BJ (cell line): ENCODE measurements at regions of chr10 and their contacts with region 1.

Region 1: GRCh38 chr10:93039721-93040120 is 20.9 kb upstream of the CYP26C1 start:
- DNase-seq: no peak
- H3K4me3 ChIP-seq: no peak overlapping the region
- H3K27me3 ChIP-seq: no peaks in the 10 kb centered on the region
- CTCF ChIP-seq: peak; percentile 79

Region 2: GRCh38 chr10:92903633-92904032 is 136.1 kb before region 1 on chr10:
- CTCF ChIA-PET with region 1: no interaction called
- POLR2A ChIA-PET with region 1: no interaction called
- DNase-seq: no peak
- H3K4me3 ChIP-seq: no peak overlapping the region
- H3K27me3 ChIP-seq: no peaks in the 10 kb centered on the region
- CTCF ChIP-seq: no peak

Region 3: GRCh38 chr10:92914478-92915325 is 125.0 kb before region 1 on chr10:
- CTCF ChIA-PET with region 1: interaction called, 10 read pairs
- POLR2A ChIA-PET with region 1: no interaction called
- DNase-seq: peak; percentile 8
- H3K4me3 ChIP-seq: no peak overlapping the region
- H3K27me3 ChIP-seq: no peaks in the 10 kb centered on the region
- CTCF ChIP-seq: peak; percentile 80

Region 4: DNA sequence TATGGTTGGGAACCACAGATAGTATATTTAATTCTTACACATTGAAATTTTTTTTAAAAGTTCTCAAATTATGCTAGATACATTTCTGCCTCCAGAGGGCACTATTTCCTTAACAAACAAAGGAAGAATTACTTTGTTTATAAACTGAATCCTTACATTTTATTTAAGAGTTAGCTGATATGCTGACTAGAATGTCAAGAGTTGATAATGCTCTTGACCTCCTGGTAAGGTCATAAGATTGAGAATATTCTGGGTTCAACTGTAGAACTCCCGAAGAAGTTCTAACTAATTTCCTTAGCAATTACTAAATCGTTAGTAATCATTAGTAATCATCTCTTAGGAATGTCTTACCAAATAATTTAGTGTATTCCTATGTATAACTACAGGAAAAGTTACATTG is 74.4 kb before region 1 on chr10:
- CTCF ChIA-PET with region 1: interaction called, 13 read pairs
- POLR2A ChIA-PET with region 1: no interaction called
- DNase-seq: no peak
- H3K4me3 ChIP-seq: no peak overlapping the region
- H3K27me3 ChIP-seq: no peaks in the 10 kb centered on the region
- CTCF ChIP-seq: peak; percentile 54

Region 5: DNA sequence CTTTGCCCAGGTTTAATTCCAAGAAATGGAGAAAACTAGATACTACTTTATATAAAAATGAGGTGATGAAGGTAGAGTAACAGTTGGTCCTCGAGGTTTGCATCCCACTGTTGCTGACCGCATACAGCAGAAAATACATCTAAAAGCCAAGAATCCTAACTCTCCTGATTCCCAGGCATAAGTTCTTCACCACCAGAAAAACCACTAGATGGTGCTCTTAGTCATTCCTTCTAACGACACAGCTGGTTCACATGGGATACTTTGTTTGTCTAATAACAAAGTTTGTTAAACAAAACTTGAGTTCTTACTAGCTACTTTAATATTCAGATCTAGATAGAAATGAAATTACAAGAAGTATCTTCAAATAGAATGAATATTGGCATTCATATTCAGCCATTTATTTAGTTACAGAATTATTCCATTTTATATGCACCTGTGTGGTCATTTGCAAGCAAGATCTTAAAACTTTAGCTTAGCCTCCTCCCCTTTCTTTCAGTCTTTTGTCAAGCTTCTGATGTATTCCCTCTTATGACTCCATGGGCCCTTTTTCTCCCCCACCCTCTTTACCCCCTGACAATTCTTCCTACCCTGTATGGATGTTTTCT is 33.2 kb before region 1 on chr10:
- CTCF ChIA-PET with region 1: interaction called, 81 read pairs
- POLR2A ChIA-PET with region 1: no interaction called
- DNase-seq: no peak
- H3K4me3 ChIP-seq: no peak overlapping the region
- H3K27me3 ChIP-seq: no peaks in the 10 kb centered on the region
- CTCF ChIP-seq: peak; percentile 74

Region 6: DNA sequence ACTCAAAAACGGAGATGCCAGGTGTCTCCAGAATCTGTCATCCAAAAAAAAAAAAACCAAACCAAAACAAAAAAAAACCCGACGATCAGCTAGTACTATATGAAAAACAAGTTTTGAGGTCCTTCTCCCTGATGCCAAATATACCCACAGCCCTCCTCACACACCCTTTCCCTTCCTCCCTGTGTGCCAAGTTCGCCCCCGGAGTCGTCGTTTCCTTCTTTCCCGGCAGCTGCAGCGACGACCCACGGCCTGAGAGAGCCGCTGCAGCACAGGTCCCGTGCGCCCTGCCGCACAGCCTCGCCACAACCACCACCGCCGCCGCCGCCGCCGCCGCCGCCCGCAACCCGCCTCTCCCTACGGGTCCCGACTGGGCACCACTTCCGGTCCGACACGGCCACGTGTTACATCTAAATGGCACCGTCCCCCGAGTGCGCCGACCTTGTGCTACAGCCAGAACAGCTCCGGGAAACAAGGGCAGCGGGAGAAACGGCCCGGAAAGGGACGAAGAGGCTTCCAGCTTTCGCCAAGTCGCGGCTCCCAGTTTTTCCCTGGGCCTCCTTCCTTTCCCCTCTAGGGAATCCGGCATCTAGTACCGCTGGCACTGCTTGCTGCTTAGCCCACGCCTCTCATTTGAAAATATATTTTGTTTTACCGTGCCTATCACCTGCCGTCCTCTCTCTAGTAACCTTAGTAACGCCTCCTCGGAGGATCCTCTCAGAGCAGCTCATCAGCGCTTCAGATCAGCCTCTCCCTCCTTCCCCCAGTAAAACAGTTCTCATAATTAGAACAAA is 662.7 kb after region 1 on chr10 and contains the start of gene FRA10AC1:
- CTCF ChIA-PET with region 1: no interaction called
- POLR2A ChIA-PET with region 1: interaction called, 12 read pairs
- DNase-seq: no peak
- H3K4me3 ChIP-seq: peak within 1 kb of the TSS; percentile 50
- H3K27me3 ChIP-seq: no peaks in the 10 kb centered on the region; the same call in 1 of the 2 replicates
- CTCF ChIP-seq: peak; percentile 43
- polyA plus RNA-seq, gene FRA10AC1: 2.1 and 5.1 TPM in 2 replicates